ENCODE measurements at regions of chr17 and their contacts with region 1.

Region 1: GRCh38 chr17:44070455-44071197 is at the start of gene G6PC3:
- DNase-seq: peak; percentile 96 to 97
- ATAC-seq: peak; percentile 88 to 92 (median 90)
- H3K4me3 ChIP-seq: peak within 1 kb of the TSS; percentile 87
- H3K27ac ChIP-seq: peak within 1 kb of the TSS; percentile 90
- H3K4me1 ChIP-seq: peaks cover 27% of the 10 kb centered on the region
- H3K27me3 ChIP-seq: no peaks in the 10 kb centered on the region
- CTCF ChIP-seq: no peak
- total RNA-seq, gene G6PC3: 27.7 to 43.3 (median 37.6) TPM

Region 2: DNA sequence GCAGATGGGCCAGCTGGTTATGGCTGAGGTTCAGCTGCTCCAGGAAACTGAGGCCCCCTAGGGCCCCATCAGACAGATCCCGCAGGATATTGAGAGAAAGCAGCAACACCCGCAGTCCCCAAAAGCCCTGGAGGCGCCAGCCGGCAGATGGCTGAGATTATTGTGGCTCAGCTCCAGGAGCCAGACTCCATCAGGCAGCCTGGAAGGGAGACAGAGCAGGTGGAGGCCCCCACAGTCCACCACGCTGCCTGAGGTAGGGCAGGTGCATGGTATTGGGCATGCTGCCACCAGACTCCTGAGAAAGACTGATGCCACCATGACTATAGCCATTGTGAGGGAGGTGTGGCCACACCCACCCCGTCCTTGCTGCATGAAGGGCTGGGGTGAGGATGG is 46.4 kb before region 1 on chr17:
- intact Hi-C with region 1: no loop called
- DNase-seq: peak in 1 of 2 donors; percentile 26
- ATAC-seq: no peak
- H3K4me3 ChIP-seq: no peak overlapping the region
- H3K27ac ChIP-seq: no peak overlapping the region
- H3K4me1 ChIP-seq: no peaks in the 10 kb centered on the region
- H3K27me3 ChIP-seq: no peaks in the 10 kb centered on the region
- CTCF ChIP-seq: no peak

Region 3: GRCh38 chr17:44095642-44096496 is 25.2 kb after region 1 on chr17:
- intact Hi-C with region 1: loop called in 1 of 2 experiments (anchors 2 kb)
- DNase-seq: peak; percentile 68 to 82
- ATAC-seq: peak; percentile 64 to 75 (median 70)
- H3K4me3 ChIP-seq: peak overlapping the region; percentile 56
- H3K27ac ChIP-seq: peak overlapping the region; percentile 92
- H3K4me1 ChIP-seq: peaks cover 57% of the 10 kb centered on the region
- H3K27me3 ChIP-seq: no peaks in the 10 kb centered on the region
- CTCF ChIP-seq: no peak

Region 4: GRCh38 chr17:44223541-44224071 is 153.0 kb after region 1 on chr17:
- intact Hi-C with region 1: no loop called
- DNase-seq: peak; percentile 35 to 44
- ATAC-seq: no peak
- H3K4me3 ChIP-seq: peak overlapping the region; percentile 85
- H3K27ac ChIP-seq: peak overlapping the region; percentile 98
- H3K4me1 ChIP-seq: peaks cover 19% of the 10 kb centered on the region
- H3K27me3 ChIP-seq: no peaks in the 10 kb centered on the region
- CTCF ChIP-seq: no peak

Measured in psoas muscle (tissue), 8 donors.